A673 (cell line): ENCODE measurements at regions of chr15 and their contacts with region 1.

Region 1: DNA sequence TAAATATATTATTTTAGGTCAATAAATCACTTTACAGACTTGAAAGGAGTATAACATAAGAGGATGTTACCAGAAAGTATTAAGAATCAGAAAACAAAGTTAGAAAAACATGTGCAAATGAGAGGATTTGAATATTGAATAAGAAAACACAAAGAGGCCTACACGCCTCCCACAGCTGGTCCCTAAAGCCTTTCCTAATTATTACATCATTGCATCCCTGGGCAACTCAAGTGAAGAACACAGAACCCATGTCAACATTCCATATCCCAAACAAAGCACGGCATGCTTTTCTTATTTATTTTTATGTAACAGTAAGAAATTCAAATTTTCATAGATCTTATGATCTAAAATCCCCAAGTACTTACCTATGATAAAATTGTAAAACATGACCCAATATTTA is 61.2 kb downstream of the HERC1 start:
- DNase-seq: peak; percentile 33
- H3K4me3 ChIP-seq: no peak overlapping the region
- H3K27ac ChIP-seq: no peak overlapping the region
- H3K4me1 ChIP-seq: peaks cover 12% of the 10 kb centered on the region
- H3K27me3 ChIP-seq: no peaks in the 10 kb centered on the region
- CTCF ChIP-seq: no peak

Region 2: GRCh38 chr15:63615935-63616334 is 156.6 kb before region 1 on chr15:
- CTCF ChIA-PET with region 1: no interaction called
- POLR2A ChIA-PET with region 1: no interaction called
- intact Hi-C with region 1: no loop called
- DNase-seq: no peak
- H3K4me3 ChIP-seq: no peak overlapping the region
- H3K27ac ChIP-seq: no peak overlapping the region
- H3K4me1 ChIP-seq: peaks cover 11% of the 10 kb centered on the region
- H3K27me3 ChIP-seq: no peaks in the 10 kb centered on the region
- CTCF ChIP-seq: no peak

Region 3: DNA sequence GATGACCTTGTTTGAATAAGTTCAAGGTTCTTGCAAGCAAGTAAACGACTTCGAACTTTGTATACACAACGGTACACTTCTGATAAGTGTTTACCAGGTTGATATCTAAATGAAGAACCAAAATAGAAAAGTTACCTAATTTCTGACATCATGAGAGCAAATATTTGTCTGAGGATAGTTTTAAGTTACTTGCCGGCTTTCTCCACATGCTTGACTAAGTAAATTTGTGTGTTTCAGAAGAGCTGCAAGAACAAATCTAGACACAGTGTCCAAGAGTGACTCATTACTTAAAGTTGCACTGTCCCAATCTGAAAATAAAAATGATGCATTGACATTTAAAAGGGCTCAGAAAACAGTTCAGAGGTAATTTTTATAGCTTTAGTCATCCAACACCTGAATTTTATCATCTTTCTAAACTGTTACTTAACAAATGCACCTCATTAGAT is 53.9 kb before region 1 on chr15:
- CTCF ChIA-PET with region 1: no interaction called
- POLR2A ChIA-PET with region 1: no interaction called
- intact Hi-C with region 1: no loop called
- DNase-seq: no peak
- H3K4me3 ChIP-seq: no peak overlapping the region
- H3K27ac ChIP-seq: no peak overlapping the region
- H3K4me1 ChIP-seq: no peaks in the 10 kb centered on the region
- H3K27me3 ChIP-seq: no peaks in the 10 kb centered on the region
- CTCF ChIP-seq: no peak

Region 4: DNA sequence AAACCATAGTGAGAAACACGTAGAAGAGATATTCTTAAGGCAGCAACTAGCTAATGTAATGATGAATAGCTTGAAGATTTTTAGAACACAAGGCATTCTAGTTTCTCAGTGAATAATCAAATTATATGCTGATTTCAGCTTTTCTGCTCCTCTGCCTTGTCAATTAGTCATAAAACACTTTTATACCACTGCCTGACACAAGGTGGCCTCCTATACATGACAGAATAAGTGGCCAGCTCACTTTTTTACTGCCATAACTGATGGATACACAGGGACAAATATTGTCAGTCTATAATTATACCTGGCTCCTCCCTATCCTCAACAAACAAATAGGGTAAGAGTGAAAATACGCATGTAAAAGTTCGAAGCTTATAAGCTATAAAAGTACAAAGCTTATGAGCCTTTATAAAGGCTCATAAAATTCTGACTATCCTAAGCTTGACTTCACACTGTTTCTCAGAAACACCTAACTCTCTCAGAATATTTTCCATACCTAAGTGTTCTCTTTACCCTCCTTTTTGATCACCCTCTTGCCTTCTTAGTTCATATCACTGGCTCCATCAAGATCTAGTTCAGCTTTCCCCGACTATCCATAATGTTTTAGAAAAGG is 20.3 kb before region 1 on chr15:
- CTCF ChIA-PET with region 1: interaction called, 3 read pairs
- POLR2A ChIA-PET with region 1: interaction called, 16 read pairs
- intact Hi-C with region 1: no loop called
- DNase-seq: peak; percentile 76
- H3K4me3 ChIP-seq: no peak overlapping the region
- H3K27ac ChIP-seq: no peak overlapping the region
- H3K4me1 ChIP-seq: no peaks in the 10 kb centered on the region
- H3K27me3 ChIP-seq: no peaks in the 10 kb centered on the region
- CTCF ChIP-seq: peak; percentile 79